ENCODE measurements at regions of chr7 and their contacts with region 1.

Region 1: GRCh38 chr7:23546897-23547572 is 15.3 kb upstream of the TRA2A start:
- DNase-seq: peak; percentile 85 to 89
- H3K4me3 ChIP-seq: no peak overlapping the region
- H3K27ac ChIP-seq: no peak overlapping the region
- H3K4me1 ChIP-seq: no peaks in the 10 kb centered on the region
- H3K27me3 ChIP-seq: no peaks in the 10 kb centered on the region
- CTCF ChIP-seq: peak; percentile 98

Region 2: GRCh38 chr7:23093546-23093945 is 453.5 kb before region 1 on chr7:
- CTCF ChIA-PET with region 1: no interaction called
- POLR2A ChIA-PET with region 1: no interaction called
- intact Hi-C with region 1: loop called (anchors 5 kb)
- DNase-seq: no peak
- H3K4me3 ChIP-seq: no peak overlapping the region
- H3K27ac ChIP-seq: no peak overlapping the region
- H3K4me1 ChIP-seq: no peaks in the 10 kb centered on the region
- H3K27me3 ChIP-seq: no peaks in the 10 kb centered on the region
- CTCF ChIP-seq: no peak

Region 3: GRCh38 chr7:23273141-23273599 is 273.9 kb before region 1 on chr7:
- CTCF ChIA-PET with region 1: interaction called, 37 read pairs
- POLR2A ChIA-PET with region 1: interaction called, 3 read pairs
- intact Hi-C with region 1: loop called (anchors 1 kb)
- DNase-seq: peak; percentile 98 to 99
- H3K4me3 ChIP-seq: peak overlapping the region; percentile 42
- H3K27ac ChIP-seq: peak overlapping the region; percentile 60
- H3K4me1 ChIP-seq: peaks cover 19% of the 10 kb centered on the region
- H3K27me3 ChIP-seq: no peaks in the 10 kb centered on the region
- CTCF ChIP-seq: peak; percentile 98

Region 4: DNA sequence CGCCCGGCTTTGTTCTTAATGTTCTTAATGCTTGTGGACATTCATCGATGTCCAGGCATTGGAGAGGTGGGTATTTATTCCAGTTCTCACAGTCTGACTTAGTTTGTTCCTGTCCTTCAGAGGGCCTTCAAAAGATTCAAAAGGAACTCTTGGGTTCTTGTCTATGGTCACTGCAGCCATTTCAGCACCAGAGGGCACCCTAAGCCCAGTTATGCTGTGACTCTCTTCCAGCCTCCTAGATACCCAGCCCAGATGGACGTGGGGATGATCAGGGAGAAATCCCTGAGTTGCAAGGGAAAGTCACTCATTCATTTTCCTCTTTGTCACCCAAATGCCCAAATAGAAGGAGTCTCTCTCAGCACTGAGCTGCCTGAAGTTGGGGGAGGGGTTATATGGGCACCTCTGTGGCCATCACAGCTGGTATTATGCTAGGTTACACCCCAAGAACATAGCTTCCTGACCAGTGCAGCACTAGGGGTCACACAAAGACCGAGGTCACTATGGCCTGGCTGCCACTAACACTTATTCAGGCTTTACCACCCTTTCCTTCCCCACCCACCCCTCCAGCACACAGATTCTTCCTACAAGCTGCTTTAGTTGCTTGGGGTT is 23.7 kb after region 1 on chr7:
- CTCF ChIA-PET with region 1: interaction called, 13 read pairs
- POLR2A ChIA-PET with region 1: no interaction called
- intact Hi-C with region 1: loop called (anchors 1 kb)
- DNase-seq: peak; percentile 77 to 81
- H3K4me3 ChIP-seq: no peak overlapping the region
- H3K27ac ChIP-seq: no peak overlapping the region
- H3K4me1 ChIP-seq: no peaks in the 10 kb centered on the region
- H3K27me3 ChIP-seq: no peaks in the 10 kb centered on the region
- CTCF ChIP-seq: peak; percentile 96

Region 5: DNA sequence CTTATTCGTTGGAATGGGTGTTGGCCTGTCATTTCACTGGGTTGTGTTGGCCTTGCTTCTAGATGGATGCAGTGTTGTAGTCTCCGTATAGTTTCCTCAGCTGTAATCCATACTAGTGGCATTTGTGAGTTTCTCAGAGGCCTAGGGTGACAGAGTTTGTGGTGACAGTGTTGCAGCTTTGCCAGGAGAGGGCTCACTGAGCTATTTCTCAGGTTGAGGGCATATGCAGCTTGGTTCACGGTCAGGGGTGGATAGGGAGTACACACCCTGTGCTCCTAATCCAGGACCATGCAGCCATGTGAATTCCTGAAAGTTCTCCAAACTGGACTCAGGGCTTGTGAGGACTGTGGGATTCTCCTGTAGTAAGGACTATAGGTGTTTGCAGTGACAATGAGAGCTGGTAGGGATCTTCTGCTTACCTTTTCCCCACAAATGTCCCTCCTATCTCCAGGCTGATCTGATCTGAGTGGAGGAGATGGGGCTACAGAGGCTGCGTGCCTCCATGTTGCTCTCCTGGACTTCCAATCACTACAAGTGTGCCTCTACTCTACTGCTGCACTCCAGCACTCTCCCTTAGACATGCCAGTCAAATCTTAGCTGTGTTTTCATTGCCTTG is 392.0 kb after region 1 on chr7:
- CTCF ChIA-PET with region 1: no interaction called
- POLR2A ChIA-PET with region 1: no interaction called
- intact Hi-C with region 1: loop called (anchors 2 kb)
- DNase-seq: peak; percentile 25 to 60
- H3K4me3 ChIP-seq: no peak overlapping the region
- H3K27ac ChIP-seq: no peak overlapping the region
- H3K4me1 ChIP-seq: peaks cover 10% of the 10 kb centered on the region; the same call in 1 of the 2 replicates
- H3K27me3 ChIP-seq: no peaks in the 10 kb centered on the region
- CTCF ChIP-seq: peak; percentile 78

Region 6: DNA sequence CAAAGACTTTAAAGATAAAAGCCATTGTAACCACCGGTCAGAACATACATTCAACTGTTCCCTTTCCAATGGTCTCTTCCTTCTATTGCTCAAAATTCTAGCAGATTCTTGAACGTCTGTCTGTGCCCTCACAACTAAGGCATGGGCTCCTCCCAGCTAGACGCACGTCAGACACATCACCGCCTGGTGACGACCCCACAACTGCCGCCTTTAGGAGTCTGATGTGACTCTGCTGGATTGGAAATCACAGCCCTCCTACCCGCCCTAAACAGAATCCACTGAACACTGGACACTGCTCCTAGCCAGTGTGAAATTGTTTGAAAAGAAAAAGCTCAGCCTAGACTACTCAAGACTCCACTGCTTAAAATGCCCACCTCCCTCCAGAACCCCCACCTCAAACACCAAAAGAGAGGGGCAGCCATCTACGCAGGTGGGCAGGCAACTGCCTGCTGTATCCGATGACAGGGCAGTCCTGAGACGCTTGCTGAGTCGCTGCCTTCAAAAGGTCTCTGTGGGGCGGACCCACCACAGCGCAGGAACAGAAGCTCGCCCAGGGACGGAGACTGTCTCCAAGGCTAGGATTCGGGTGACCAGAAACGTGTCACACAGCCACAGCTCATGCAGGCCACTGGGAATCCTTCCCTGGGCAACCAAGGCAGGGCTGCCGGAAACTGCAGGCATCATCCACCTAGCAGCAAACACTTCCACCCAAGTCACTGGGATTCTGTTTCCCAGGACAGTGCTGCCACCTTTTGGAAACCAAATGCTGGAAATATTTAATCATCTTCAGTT is 1175.5 kb after region 1 on chr7:
- CTCF ChIA-PET with region 1: interaction called, 10 read pairs
- POLR2A ChIA-PET with region 1: no interaction called
- intact Hi-C with region 1: no loop called
- DNase-seq: peak in 1 of 2 experiments; percentile 28
- H3K4me3 ChIP-seq: no peak overlapping the region
- H3K27ac ChIP-seq: peak overlapping the region; percentile 31; the same call in 1 of the 2 replicates
- H3K4me1 ChIP-seq: peaks cover 26% of the 10 kb centered on the region
- H3K27me3 ChIP-seq: no peaks in the 10 kb centered on the region
- CTCF ChIP-seq: peak; percentile 59